GM12878 (cell line): ENCODE measurements at regions of chr1 and their contacts with region 1.

Region 1: DNA sequence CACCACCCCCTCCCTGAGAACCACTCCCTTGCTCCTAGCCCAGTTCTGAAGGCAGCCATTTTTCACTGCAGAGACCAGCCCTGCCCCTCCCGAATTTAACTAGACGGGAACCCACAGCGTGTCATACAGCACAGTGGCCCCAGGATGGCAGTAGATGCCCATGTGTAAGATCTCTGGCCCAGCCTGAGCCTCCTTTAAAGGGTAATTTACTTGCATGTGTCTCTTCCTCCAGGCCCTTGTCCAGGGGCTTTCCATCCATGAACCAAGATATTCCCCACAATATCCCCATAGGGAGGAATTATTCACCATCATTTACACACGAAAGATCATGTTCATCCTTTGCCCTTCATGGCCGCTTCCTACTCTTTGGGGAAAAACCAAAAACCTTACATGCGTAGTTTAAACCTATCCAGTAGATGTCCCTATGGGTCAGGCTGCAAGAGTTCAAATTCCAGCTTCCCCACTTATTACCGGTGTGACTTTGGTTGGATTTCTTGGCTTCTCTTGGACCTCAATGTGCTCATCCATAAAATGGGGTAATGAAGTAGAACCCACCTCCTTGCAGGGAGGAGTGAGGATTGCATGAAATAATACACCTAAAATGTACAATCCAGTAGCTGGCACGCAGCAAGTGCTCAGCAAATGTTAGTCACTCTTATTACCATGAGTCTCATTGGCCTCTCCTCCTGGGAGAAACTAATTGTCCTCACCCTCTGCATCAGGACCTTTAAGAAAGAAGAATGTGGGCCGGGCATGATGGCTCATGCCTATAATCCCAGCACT is 4.0 kb upstream of the LACTBL1 start:
- DNase-seq: peak; percentile 40
- ATAC-seq: peak; percentile 99
- H3K4me3 ChIP-seq: no peak overlapping the region
- H3K27ac ChIP-seq: no peak overlapping the region
- H3K4me1 ChIP-seq: no peaks in the 10 kb centered on the region
- H3K27me3 ChIP-seq: peaks cover 0 to under 1% of the 10 kb centered on the region in 2 experiments; a peak in 2 of 4 replicates
- CTCF ChIP-seq: peak; percentile 88 to 95 (median 90)
- EP300 ChIP-seq: no peak
- POLR2A ChIP-seq: no peak
- RAD21 ChIP-seq: peak; percentile 95

Region 2: GRCh38 chr1:23069675-23070074 is 93.0 kb after region 1 on chr1:
- CTCF ChIA-PET with region 1: interaction called, 5 read pairs
- POLR2A ChIA-PET with region 1: no interaction called
- RAD21 ChIA-PET with region 1: no interaction called
- SMC1A ChIA-PET with region 1: no interaction called
- in situ Hi-C with region 1: no loop called
- intact Hi-C with region 1: loop called (anchors 5 kb)
- DNase-seq: no peak
- ATAC-seq: no peak
- H3K4me3 ChIP-seq: no peak overlapping the region
- H3K27ac ChIP-seq: no peak overlapping the region
- H3K4me1 ChIP-seq: no peaks in the 10 kb centered on the region
- H3K27me3 ChIP-seq: no peaks in the 10 kb centered on the region
- CTCF ChIP-seq: no peak
- EP300 ChIP-seq: no peak
- POLR2A ChIP-seq: no peak
- RAD21 ChIP-seq: no peak

Region 3: DNA sequence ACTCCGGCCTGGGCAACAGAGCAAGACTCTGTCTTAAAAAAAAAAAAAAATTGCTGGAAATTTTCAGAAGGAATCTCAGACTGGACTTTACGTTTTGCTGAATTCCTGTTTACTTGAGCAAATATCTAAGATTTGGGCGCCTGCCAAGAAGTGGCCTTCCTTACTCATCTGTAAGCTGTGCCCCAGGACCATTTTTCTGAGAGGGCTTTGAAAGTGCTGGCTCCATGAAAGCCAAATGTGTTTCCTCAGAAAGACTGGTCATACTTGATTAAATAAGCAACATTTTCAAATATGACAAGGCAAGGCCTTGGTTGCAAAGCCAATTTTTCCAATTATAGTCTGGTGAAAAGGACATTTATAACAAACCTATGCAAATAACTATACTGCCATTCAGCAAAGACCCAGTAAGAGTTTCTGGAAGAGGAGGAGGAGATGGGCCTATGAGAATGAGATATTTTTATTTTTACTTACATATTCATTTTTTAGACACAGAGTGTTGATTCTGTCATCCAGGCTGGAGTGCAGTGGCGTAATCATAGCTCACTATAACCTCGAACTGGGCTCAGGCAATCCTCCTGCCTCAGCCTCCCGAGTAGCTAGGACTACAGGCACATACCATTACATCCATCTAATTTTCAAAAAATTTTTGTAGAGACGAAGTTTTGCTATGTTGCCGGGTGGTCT is 296.9 kb after region 1 on chr1:
- CTCF ChIA-PET with region 1: no interaction called
- POLR2A ChIA-PET with region 1: no interaction called
- RAD21 ChIA-PET with region 1: no interaction called
- SMC1A ChIA-PET with region 1: no interaction called
- in situ Hi-C with region 1: no loop called
- intact Hi-C with region 1: loop called (anchors 2 kb)
- DNase-seq: no peak
- ATAC-seq: no peak
- H3K4me3 ChIP-seq: no peak overlapping the region
- H3K27ac ChIP-seq: no peak overlapping the region
- H3K4me1 ChIP-seq: no peaks in the 10 kb centered on the region
- H3K27me3 ChIP-seq: no peaks in the 10 kb centered on the region
- CTCF ChIP-seq: no peak
- EP300 ChIP-seq: no peak
- POLR2A ChIP-seq: no peak
- RAD21 ChIP-seq: no peak